GM12878 (cell line): ENCODE measurements at regions of chr19 and their contacts with region 1.

Region 1: DNA sequence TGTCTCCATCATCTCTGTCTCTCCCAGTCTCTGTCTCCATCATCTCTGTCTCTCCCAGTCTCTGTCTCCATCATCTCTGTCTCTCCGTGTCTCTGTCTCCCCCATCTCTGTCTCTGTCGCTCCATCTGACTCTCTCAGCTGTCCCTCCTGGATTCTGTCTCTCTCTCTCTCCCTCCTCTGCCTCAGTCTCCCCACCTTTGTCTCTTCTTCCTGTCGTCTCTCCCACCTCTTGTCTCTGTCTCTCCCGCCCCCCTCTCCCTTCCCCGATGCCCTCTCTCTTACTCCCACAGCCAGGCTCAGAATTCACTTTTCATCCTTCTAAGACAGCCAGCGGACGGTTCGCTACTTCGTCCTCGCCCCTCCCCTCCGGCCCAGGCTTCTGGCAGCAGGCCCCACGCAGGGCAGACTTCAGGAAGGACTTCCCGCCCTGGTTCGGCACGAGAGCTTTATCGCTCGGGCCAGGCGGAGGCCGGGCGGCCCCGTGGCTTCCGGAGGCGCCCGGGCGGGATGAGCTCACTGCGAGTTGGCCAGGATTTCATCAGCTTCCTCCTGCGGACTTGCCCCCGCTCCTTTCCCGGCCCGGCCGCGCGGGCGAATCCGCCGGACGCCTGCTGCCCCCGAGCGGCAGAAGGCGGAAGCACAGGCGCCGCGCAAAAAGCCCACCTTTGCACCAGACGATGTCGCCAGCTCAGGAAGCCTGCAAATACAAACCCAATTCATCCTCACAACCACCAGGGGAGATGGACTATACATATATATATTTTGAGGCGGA is 12.4 kb upstream of the CCDC9 start:
- DNase-seq: no peak
- ATAC-seq: peak; percentile 94
- H3K4me3 ChIP-seq: peak overlapping the region; percentile 54
- H3K27ac ChIP-seq: peak overlapping the region; percentile 65
- H3K4me1 ChIP-seq: peaks cover 29% of the 10 kb centered on the region
- H3K27me3 ChIP-seq: peaks cover 1 to 4% of the 10 kb centered on the region in 2 experiments
- CTCF ChIP-seq: peak; percentile 93 to 99 (median 95); a peak in 5 of 6 replicates
- EP300 ChIP-seq: no peak; a peak in 1 of 4 replicates
- POLR2A ChIP-seq: peak; percentile 85
- RAD21 ChIP-seq: peak; percentile 95

Region 2: GRCh38 chr19:47013041-47013517 is 230.9 kb before region 1 on chr19:
- CTCF ChIA-PET with region 1: interaction called, 35 read pairs
- POLR2A ChIA-PET with region 1: no interaction called
- RAD21 ChIA-PET with region 1: interaction called, 5 read pairs
- SMC1A ChIA-PET with region 1: interaction called, 13 read pairs
- in situ Hi-C with region 1: no loop called
- intact Hi-C with region 1: no loop called
- DNase-seq: no peak
- ATAC-seq: peak; percentile 95
- H3K4me3 ChIP-seq: no peak overlapping the region
- H3K27ac ChIP-seq: no peak overlapping the region
- H3K4me1 ChIP-seq: no peaks in the 10 kb centered on the region
- H3K27me3 ChIP-seq: no peaks in the 10 kb centered on the region
- CTCF ChIP-seq: peak; percentile 95 to 99 (median 97)
- EP300 ChIP-seq: no peak
- POLR2A ChIP-seq: no peak
- RAD21 ChIP-seq: peak; percentile 87

Region 3: DNA sequence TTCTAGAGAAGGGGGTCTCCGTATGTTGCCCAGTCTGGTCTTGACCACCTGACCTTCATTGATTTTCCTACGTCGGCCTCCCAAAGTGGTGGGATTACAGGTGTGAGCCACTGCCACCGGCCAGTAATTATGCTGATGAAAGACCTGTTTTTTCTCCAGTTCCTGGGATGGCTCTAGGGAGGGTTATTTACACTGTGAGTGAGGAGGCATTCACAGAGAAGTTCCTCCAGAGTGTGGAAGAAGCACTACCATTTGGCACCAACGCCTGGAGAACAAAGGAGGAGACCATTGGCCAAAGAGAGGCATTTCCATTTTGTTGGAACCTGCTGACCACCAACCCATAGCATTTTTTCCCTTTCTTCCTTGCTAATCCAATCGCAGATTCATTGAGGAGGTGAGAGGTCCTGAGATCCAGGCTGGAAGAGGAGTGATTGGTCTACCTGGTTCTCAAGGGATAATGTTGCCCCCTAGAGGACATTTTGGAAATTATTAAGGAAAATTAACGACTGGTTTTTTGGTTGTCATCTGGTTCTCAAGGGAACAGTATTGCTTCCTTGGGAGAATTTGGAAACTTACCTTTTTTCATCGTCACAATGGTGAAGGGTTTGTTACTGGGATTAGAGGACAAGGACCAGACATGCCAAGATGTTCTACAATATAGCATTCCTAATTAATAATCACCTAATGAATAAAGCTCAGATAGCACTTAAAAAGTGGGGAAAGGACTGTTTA is 118.9 kb before region 1 on chr19:
- CTCF ChIA-PET with region 1: interaction called, 12 read pairs
- POLR2A ChIA-PET with region 1: interaction called, 6 read pairs
- RAD21 ChIA-PET with region 1: interaction called, 10 read pairs
- SMC1A ChIA-PET with region 1: no interaction called
- in situ Hi-C with region 1: no loop called
- intact Hi-C with region 1: loop called (anchors 1 kb)
- DNase-seq: no peak
- ATAC-seq: peak; percentile 76
- H3K4me3 ChIP-seq: no peak overlapping the region
- H3K27ac ChIP-seq: no peak overlapping the region
- H3K4me1 ChIP-seq: no peaks in the 10 kb centered on the region; the same call in 1 of the 2 replicates
- H3K27me3 ChIP-seq: no peaks in the 10 kb centered on the region
- CTCF ChIP-seq: peak; percentile 59 to 81 (median 65)
- EP300 ChIP-seq: no peak
- POLR2A ChIP-seq: no peak
- RAD21 ChIP-seq: peak; percentile 89

Region 4: GRCh38 chr19:47152224-47153017 is 91.5 kb before region 1 on chr19:
- CTCF ChIA-PET with region 1: interaction called, 108 read pairs
- POLR2A ChIA-PET with region 1: interaction called, 5 read pairs
- RAD21 ChIA-PET with region 1: interaction called, 36 read pairs
- SMC1A ChIA-PET with region 1: interaction called, 38 read pairs
- in situ Hi-C with region 1: loop called (anchors 5 kb)
- intact Hi-C with region 1: loop called (anchors 1 kb)
- DNase-seq: no peak
- ATAC-seq: no peak
- H3K4me3 ChIP-seq: no peak overlapping the region
- H3K27ac ChIP-seq: no peak overlapping the region
- H3K4me1 ChIP-seq: peaks cover 14% of the 10 kb centered on the region
- H3K27me3 ChIP-seq: no peaks in the 10 kb centered on the region
- CTCF ChIP-seq: no peak
- EP300 ChIP-seq: no peak
- POLR2A ChIP-seq: no peak
- RAD21 ChIP-seq: no peak

Region 5: DNA sequence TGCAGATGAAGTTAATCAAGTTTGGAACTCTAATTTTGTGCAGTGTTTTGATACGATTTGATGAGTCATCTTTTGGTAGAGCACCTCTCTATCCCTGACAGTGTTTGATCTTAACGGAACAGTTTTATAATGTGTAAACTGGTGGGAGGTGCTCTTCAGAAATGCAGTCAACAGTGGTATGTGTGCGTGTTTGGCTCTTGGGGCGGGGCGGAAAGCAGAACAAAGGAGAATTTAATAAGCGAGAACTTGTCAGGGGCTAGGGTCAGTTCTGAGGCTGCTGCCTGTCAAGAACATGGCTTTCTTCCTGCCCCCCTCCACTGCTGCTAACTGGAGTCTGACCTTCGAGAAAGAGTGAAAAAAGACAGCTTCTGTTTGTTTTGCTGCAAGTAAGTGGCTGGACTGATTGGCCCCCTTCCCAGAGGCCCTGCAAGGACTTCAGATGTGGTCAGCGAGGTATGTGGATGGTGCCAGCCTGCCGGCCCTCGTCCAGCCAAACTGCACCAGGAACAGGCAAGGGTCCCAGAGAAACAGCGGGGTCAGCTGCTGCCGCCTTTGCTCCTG is 53.7 kb before region 1 on chr19:
- CTCF ChIA-PET with region 1: interaction called, 28 read pairs
- POLR2A ChIA-PET with region 1: interaction called, 5 read pairs
- RAD21 ChIA-PET with region 1: interaction called, 23 read pairs
- SMC1A ChIA-PET with region 1: interaction called, 5 read pairs
- in situ Hi-C with region 1: no loop called
- intact Hi-C with region 1: no loop called
- DNase-seq: no peak
- ATAC-seq: no peak
- H3K4me3 ChIP-seq: no peak overlapping the region
- H3K27ac ChIP-seq: no peak overlapping the region
- H3K4me1 ChIP-seq: peaks cover 19% of the 10 kb centered on the region
- H3K27me3 ChIP-seq: no peaks in the 10 kb centered on the region
- CTCF ChIP-seq: no peak
- EP300 ChIP-seq: no peak
- POLR2A ChIP-seq: no peak
- RAD21 ChIP-seq: no peak

Region 6: GRCh38 chr19:47225746-47226425 is 18.1 kb before region 1 on chr19:
- CTCF ChIA-PET with region 1: interaction called, 55 read pairs
- POLR2A ChIA-PET with region 1: interaction called, 17 read pairs
- RAD21 ChIA-PET with region 1: interaction called, 37 read pairs
- SMC1A ChIA-PET with region 1: interaction called, 17 read pairs
- in situ Hi-C with region 1: no loop called
- intact Hi-C with region 1: loop called (anchors 1 kb)
- DNase-seq: no peak
- ATAC-seq: peak; percentile 73
- H3K4me3 ChIP-seq: peak overlapping the region; percentile 91; the same call in 1 of the 2 replicates
- H3K27ac ChIP-seq: peak overlapping the region; percentile 78
- H3K4me1 ChIP-seq: peaks cover 34% of the 10 kb centered on the region
- H3K27me3 ChIP-seq: no peaks in the 10 kb centered on the region
- CTCF ChIP-seq: peak; percentile 1 to 46 (median 5); a peak in 2 of 6 replicates
- EP300 ChIP-seq: peak; percentile 9 to 34; a peak in 1 of 4 replicates
- POLR2A ChIP-seq: no peak; the same call in 1 of the 2 replicates
- RAD21 ChIP-seq: no peak

Region 7: DNA sequence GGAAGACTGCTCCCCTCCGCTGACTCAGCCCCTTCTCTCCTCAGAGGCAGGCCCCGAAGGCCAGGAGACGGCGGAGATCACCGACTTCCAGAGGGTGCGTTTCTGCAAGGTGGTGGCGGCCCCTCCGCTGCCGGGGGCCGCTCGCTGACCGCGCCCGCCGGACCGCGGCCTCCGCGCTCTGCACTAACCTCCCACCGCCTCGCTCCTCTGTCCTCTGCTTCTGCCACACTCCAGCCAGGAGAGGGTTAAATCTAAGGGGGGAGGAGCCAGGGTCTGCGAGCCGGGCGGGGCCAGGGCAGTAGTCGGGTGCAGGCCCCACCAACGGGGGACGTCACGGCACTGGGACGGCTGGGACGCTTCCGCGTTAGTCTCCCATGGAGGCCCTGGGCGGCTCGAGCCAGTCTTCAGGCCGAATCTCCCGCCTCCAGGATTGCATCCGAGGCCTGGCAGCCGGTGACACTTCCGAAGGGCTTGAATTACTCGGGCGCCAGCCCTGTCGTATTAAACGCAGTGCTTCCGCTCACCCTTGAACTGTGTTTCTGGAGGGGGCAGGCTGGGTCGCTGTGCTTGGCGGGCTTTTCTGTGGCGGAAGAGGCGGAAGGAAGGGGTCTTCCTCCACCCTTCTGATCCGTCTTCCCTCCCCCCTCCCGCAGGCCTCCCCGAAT is 29.5 kb after region 1 on chr19:
- CTCF ChIA-PET with region 1: interaction called, 6 read pairs
- POLR2A ChIA-PET with region 1: interaction called, 5 read pairs
- RAD21 ChIA-PET with region 1: interaction called, 13 read pairs
- SMC1A ChIA-PET with region 1: interaction called, 4 read pairs
- in situ Hi-C with region 1: no loop called
- intact Hi-C with region 1: no loop called
- DNase-seq: no peak
- ATAC-seq: peak; percentile 89
- H3K4me3 ChIP-seq: peak overlapping the region; percentile 86
- H3K27ac ChIP-seq: peak overlapping the region; percentile 99
- H3K4me1 ChIP-seq: peaks cover 10% of the 10 kb centered on the region
- H3K27me3 ChIP-seq: no peaks in the 10 kb centered on the region
- CTCF ChIP-seq: no peak
- EP300 ChIP-seq: 0 out of 4 replicates have a peak, but pooled peaks of 1 of the 2 experiments have one; percentile 11
- POLR2A ChIP-seq: peak; percentile 84
- RAD21 ChIP-seq: no peak